ENCODE measurements at regions of chr10 and their contacts with region 1.

Region 1: GRCh38 chr10:12782537-12782936 is 219.0 kb downstream of the CCDC3 start:
- DNase-seq: peak; percentile 62
- H3K4me3 Mint-ChIP-seq: no peak overlapping the region
- H3K27ac Mint-ChIP-seq: no peak overlapping the region
- H3K4me1 Mint-ChIP-seq: peaks cover 8% of the 10 kb centered on the region
- H3K27me3 Mint-ChIP-seq: no peaks in the 10 kb centered on the region

Region 2: GRCh38 chr10:12902135-12902572 is 119.6 kb after region 1 on chr10:
- CTCF ChIA-PET with region 1: interaction called, 12 read pairs
- intact Hi-C with region 1: loop called (anchors 2 kb)
- DNase-seq: peak; percentile 71
- H3K4me3 Mint-ChIP-seq: no peak overlapping the region
- H3K27ac Mint-ChIP-seq: no peak overlapping the region
- H3K4me1 Mint-ChIP-seq: no peaks in the 10 kb centered on the region
- H3K27me3 Mint-ChIP-seq: peaks cover 5% of the 10 kb centered on the region

Region 3: DNA sequence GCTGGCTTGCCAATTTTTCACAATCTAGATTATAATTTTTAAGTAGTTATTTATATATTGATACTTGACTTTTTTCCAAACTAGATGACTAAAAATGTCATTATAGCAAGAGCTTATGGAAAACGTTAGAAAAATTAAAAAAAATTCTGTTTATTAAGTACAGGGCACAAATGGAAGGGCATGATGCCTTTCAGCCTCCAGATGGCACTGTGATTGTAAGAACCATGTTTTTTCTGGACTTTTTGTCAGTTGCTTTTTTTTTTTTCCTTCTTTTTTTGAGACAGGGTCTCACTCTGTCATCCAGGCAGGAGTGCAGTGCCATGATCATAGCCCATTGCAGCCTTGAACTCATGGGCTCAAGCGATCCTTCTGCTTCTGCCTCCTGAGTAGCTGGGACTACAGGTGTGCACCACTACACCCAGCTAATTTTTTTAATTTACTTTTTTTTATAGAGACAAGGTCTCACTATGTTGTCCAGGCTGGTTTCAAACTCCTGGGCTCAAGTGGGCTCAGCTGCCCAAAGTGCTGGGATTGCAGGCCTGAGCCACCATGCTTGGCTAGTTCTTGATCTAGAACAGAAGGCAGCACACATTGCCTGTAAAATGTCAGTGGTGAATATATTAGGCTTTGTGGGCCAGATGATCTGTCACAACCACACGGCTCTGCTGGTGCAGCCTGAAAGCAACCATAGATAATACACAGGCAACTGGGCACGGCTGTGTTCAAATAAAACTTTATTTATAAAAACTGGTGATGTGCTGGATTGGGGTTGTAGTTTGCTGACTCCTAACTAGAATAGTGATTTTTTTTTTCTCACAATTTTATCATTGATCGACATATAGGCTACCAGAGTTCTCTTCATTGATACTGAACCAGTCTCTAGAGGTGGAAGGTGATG is 424.3 kb after region 1 on chr10:
- CTCF ChIA-PET with region 1: no interaction called
- intact Hi-C with region 1: no loop called
- DNase-seq: no peak
- H3K4me3 Mint-ChIP-seq: no peak overlapping the region
- H3K27ac Mint-ChIP-seq: no peak overlapping the region
- H3K4me1 Mint-ChIP-seq: no peaks in the 10 kb centered on the region
- H3K27me3 Mint-ChIP-seq: no peaks in the 10 kb centered on the region